ENCODE measurements at regions of chr1 and their contacts with region 1.

Region 1: GRCh38 chr1:206716870-206717673 is 32.4 kb downstream of the MAPKAPK2 start:
- DNase-seq: peak; percentile 45
- H3K4me3 Mint-ChIP-seq: no peak overlapping the region
- H3K27ac Mint-ChIP-seq: peak overlapping the region; percentile 61
- H3K4me1 Mint-ChIP-seq: peaks cover 83% of the 10 kb centered on the region
- H3K27me3 Mint-ChIP-seq: no peaks in the 10 kb centered on the region

Region 2: GRCh38 chr1:205977402-205978014 is 739.6 kb before region 1 on chr1:
- CTCF ChIA-PET with region 1: no interaction called
- POLR2A ChIA-PET with region 1: no interaction called
- intact Hi-C with region 1: no loop called
- DNase-seq: peak; percentile 82
- H3K4me3 Mint-ChIP-seq: no peak overlapping the region
- H3K27ac Mint-ChIP-seq: no peak overlapping the region
- H3K4me1 Mint-ChIP-seq: no peaks in the 10 kb centered on the region
- H3K27me3 Mint-ChIP-seq: peaks cover 2% of the 10 kb centered on the region

Region 3: DNA sequence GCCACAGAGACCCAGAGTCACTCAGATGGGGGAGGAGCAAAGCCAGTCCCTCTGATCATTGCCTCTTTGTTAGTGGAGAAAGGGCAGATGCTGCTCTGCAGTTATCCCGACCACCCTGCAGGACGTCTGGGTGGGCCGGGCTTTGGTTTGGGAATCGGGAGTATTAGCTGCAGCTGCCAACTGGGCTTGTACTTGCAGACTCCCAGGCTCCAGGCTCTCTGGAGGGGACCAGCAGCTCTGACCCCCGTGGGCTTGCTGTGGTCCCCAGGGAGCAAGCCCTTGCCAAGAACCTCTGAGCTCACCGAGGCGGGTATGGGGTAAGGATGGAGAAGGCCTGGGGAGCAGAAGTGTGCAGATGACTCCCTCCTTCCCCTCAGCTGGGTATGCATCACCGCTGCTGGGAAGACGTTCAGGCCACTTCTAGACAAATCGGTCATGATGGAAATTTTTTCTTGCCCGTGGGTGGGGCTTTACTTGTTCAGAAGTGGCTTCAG is 10.7 kb before region 1 on chr1:
- CTCF ChIA-PET with region 1: interaction called, 3 read pairs
- POLR2A ChIA-PET with region 1: interaction called, 3 read pairs
- intact Hi-C with region 1: loop called (anchors 1 kb)
- DNase-seq: peak; percentile 88
- H3K4me3 Mint-ChIP-seq: no peak overlapping the region
- H3K27ac Mint-ChIP-seq: peak overlapping the region; percentile 83
- H3K4me1 Mint-ChIP-seq: peaks cover 87% of the 10 kb centered on the region
- H3K27me3 Mint-ChIP-seq: no peaks in the 10 kb centered on the region

Measured in activated CD4-positive, alpha-beta memory T cell treated with anti-CD3 and anti-CD28 coated beads for 36 hours (primary cell).